Lower leg skin (tissue), 4 donors: ENCODE measurements at regions of chr2 and their contacts with region 1.

Region 1: DNA sequence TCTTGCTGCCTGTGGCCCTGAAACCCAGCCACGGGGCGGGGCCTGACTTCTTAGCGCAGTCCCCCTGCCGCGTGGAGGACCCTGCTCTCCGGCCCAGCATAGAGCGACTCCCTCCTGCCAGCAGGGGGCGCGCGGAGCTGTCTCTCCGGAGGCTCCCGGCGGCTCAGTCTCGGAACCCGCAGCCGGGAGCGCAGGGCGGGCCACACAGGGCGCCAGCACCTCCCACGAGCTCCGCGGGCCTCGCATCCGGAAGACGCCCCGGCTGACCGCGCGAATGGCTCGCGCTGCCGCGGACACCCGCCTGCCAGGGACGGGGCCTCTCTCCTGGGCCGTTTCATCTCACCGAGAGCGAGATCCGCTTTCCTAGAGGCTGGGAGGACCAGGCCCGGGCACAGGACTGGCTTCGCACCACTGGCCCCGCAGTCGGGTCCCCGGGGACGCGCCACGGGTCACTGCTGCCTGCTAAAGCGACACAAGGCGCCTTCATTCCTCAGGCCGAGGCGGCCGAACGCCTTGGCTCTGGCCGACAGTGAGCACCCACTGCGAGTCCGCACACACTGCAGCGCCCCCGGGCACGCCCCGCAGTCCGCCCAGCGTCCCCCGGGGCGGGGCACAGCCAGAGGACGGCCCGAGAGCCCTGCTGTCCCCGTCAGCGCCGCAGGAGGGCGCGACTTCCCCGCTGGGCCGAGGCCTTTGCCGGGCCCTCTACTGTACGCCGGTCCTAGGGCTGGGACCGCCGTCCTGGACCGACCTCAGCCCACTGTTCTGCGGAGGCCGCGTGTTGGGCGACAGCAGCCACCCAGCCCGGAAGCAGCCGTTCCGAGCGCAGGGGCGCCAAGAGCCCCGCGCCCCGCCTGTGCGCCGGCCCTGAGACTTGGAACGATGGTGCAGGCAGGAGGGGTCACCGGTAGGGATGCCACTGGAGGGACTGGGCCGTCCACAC is 39.0 kb upstream of the ARHGEF4 start:
- DNase-seq: peak; percentile 85 to 97
- H3K4me3 ChIP-seq: peak overlapping the region; percentile 67
- CTCF ChIP-seq: peak in 2 of 3 donors; percentile 3 to 68
- POLR2A ChIP-seq: no peak

Region 2: DNA sequence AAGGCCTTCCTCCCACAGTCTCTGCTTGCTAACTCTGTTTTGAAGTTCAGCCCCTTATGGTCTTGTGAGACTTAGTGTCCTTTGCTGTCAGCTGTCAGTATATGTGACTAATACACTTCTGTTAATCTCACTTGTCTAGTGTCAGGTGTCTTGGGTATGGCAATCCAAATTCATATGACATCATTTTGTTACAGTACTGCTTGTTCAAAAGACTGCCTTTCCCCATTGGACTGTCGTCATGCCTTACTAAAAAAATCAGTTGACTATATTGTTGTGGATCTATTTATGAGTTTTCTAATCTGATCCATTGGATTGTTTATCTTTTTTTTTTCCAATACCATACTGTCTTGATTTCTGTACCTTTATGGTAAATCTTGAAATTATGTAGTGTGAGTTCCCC is 1867.7 kb before region 1 on chr2:
- intact Hi-C with region 1: no loop called
- DNase-seq: no peak
- H3K4me3 ChIP-seq: no peak overlapping the region
- CTCF ChIP-seq: no peak
- POLR2A ChIP-seq: no peak

Region 3: DNA sequence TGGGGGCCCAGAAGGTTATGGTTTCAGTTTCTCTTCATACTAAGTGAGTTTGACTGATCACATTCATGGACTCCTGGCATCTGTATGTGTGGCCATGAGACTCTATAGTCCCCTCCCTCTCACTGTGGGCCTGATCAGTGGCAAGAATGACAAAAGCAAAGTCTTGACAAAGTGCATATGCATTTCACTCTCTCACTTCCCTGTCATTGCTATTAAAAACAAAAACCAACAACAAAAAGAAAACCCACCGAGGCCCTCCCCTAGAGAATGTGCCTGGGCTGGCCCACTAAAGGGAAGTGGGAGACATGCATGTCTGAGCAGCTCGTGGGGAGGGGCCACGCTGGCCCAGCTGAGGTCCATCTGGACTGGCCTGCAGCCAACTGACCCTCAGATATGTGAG is 1418.4 kb before region 1 on chr2:
- intact Hi-C with region 1: no loop called
- DNase-seq: no peak
- H3K4me3 ChIP-seq: no peak overlapping the region
- CTCF ChIP-seq: no peak
- POLR2A ChIP-seq: no peak

Region 4: DNA sequence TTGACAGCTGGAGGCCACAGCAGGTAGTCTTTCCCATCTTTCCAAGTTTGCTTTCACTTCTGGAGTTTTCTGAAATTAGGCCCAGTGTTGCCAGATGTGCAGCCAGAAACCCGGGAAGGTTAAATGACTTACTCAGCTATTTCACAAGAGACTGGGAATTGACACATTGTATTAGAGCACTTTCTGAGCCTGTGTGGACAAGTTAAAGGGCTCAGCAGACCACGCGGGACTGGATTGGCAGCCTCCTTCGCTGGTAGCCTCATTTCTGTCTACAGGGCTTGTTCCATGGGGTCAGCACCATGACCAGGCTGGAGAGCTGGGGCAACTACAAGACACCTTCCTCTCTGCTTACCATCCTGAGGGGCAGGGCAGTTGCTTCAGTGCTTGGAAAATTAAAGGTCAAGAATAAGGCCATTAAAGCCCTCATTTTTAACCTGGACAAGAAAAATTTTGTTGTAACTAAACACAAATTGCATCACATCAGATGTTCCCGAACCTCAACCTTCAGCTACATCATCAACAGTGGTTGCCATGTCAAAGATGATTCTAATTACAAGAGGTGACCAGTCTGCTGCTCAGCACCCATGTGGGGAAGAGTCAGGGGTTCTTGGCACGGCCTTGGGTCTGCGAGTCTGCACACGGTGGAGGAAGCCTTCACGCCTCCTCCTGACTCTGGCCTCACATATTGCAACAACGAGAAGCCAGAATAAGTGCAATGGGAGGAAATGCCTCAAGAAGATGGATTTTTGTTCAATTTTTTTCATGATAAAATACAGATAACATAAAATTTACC is 1097.8 kb before region 1 on chr2:
- intact Hi-C with region 1: no loop called
- DNase-seq: no peak
- H3K4me3 ChIP-seq: no peak overlapping the region
- CTCF ChIP-seq: no peak
- POLR2A ChIP-seq: no peak

Region 5: GRCh38 chr2:130917006-130917688 is 119.4 kb after region 1 on chr2:
- intact Hi-C with region 1: loop called (anchors 5 kb)
- DNase-seq: no peak
- H3K4me3 ChIP-seq: no peak overlapping the region
- CTCF ChIP-seq: no peak
- POLR2A ChIP-seq: no peak